Prostate gland (tissue), 2 donors: ENCODE measurements at regions of chr2 and their contacts with region 1.

Region 1: DNA sequence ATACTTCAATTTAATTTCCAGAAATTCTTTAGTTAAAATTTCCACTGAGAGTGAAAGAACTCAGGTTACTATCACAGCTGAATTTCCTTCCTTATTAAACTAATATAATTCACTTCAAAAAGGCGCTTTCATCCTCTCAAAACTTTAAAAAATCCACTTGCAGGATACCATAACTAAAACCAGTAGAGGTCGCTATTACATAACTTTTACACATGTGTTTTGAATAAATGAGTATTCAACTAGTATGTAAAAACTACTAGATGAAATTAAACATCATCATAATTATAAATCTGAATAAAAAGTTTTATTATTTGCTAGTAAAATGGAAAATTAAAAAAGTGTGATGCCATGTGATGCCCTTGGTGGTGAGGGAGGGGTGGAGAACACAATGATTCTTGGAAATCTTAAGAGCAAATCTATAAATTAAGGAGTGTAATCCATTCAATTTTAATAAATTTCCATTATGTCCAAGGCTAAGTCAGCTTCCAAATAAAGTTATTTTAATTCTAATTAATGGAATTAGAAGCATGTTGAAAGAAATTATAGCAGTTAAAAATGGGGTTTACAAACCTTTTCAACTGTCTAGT is 61.4 kb downstream of the SOS1 start:
- DNase-seq: no peak
- H3K4me3 ChIP-seq: no peak overlapping the region
- H3K27ac ChIP-seq: no peak overlapping the region
- H3K4me1 ChIP-seq: no peaks in the 10 kb centered on the region
- H3K27me3 ChIP-seq: no peaks in the 10 kb centered on the region
- CTCF ChIP-seq: peak; percentile 40 to 74 (median 70)
- POLR2A ChIP-seq: no peak

Region 2: GRCh38 chr2:38417745-38418689 is 641.4 kb before region 1 on chr2:
- intact Hi-C with region 1: no loop called
- DNase-seq: no peak
- H3K4me3 ChIP-seq: no peak overlapping the region
- H3K27ac ChIP-seq: no peak overlapping the region
- H3K4me1 ChIP-seq: no peaks in the 10 kb centered on the region
- H3K27me3 ChIP-seq: no peaks in the 10 kb centered on the region
- CTCF ChIP-seq: no peak
- POLR2A ChIP-seq: no peak

Region 3: GRCh38 chr2:38947240-38948239 is 111.9 kb before region 1 on chr2:
- intact Hi-C with region 1: loop called (anchors 5 kb)
- DNase-seq: peak; percentile 79
- H3K4me3 ChIP-seq: no peak overlapping the region
- H3K27ac ChIP-seq: no peak overlapping the region
- H3K4me1 ChIP-seq: no peaks in the 10 kb centered on the region
- H3K27me3 ChIP-seq: no peaks in the 10 kb centered on the region
- CTCF ChIP-seq: peak; percentile 45 to 75 (median 70)
- POLR2A ChIP-seq: no peak